CD4-positive, alpha-beta memory T cell (primary cell): ENCODE measurements at regions of chr21 and their contacts with region 1.

Region 1: GRCh38 chr21:15592271-15592860 is 137.4 kb upstream of the USP25 start:
- DNase-seq: peak in 4 of 5 donors; percentile 25 to 37 (median 32)
- H3K4me3 ChIP-seq: no peak overlapping the region
- H3K4me3 Mint-ChIP-seq: no peak overlapping the region
- H3K27ac ChIP-seq: no peak overlapping the region
- H3K27ac Mint-ChIP-seq: no peak overlapping the region
- H3K4me1 ChIP-seq: no peaks in the 10 kb centered on the region
- H3K4me1 Mint-ChIP-seq: no peaks in the 10 kb centered on the region
- H3K27me3 ChIP-seq: no peaks in the 10 kb centered on the region
- H3K27me3 Mint-ChIP-seq: peaks cover 6% of the 10 kb centered on the region in 2 donors

Region 2: DNA sequence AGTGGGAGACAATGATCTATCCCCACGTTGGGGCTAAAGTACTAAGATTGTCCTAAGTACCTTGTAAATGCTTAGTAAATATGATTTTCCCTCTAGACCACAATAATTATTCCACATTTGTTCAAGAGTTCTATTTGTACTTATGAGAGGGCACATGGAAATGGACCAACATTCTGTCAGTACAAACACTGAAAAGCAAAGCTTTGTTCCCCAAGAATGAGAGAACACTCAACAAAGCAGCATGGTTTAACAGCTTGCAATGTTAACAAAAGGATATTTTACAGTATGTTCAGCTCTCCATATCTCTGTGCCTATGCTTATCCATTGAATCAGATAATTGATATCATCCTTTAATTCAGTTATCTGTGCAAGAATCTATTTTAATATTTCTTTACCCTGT is 1341.0 kb before region 1 on chr21:
- CTCF ChIA-PET with region 1: no interaction called
- POLR2A ChIA-PET with region 1: no interaction called
- intact Hi-C with region 1: loop called (anchors 1 kb)
- DNase-seq: no peak
- H3K4me3 ChIP-seq: no peak overlapping the region
- H3K4me3 Mint-ChIP-seq: no peak overlapping the region
- H3K27ac ChIP-seq: no peak overlapping the region
- H3K27ac Mint-ChIP-seq: no peak overlapping the region
- H3K4me1 ChIP-seq: peaks cover 4% of the 10 kb centered on the region
- H3K4me1 Mint-ChIP-seq: peaks cover 4 to 7% (median 5%) of the 10 kb centered on the region in 4 donors
- H3K27me3 ChIP-seq: no peaks in the 10 kb centered on the region
- H3K27me3 Mint-ChIP-seq: peaks cover 5 to 11% of the 10 kb centered on the region in 2 donors

Region 3: DNA sequence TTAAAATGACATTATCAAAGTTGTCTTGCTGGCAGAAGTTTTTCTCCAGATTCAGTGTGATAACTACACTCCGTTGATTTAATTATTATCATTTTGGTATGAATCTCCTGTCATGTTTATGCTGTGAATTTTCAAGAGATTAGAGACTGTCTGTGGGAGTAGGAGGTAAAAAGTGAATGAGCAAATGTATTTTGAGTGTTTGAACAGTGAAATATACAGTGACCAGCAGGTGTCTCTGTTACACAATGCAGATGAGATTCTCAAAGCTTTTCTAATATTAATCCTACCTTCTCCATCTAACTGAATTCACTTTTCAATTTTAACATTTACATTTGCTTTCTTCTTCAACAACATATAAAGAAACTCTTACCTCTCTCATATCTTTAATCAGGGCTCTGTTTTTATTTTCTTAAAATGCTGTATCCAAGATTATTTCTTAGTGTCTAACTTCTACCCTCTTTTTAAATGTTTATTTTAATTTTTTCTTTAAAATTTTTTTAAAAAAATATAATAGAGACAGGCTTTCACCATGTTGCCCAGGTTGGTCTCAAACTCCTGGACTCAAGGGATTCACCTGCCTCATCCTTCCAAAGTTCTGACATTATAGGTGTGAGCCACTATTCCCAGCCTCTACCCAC is 1188.6 kb before region 1 on chr21:
- CTCF ChIA-PET with region 1: no interaction called
- POLR2A ChIA-PET with region 1: no interaction called
- intact Hi-C with region 1: loop called (anchors 1 kb)
- DNase-seq: peak in 4 of 5 donors; percentile 32 to 45 (median 38)
- H3K4me3 ChIP-seq: no peak overlapping the region
- H3K4me3 Mint-ChIP-seq: no peak overlapping the region
- H3K27ac ChIP-seq: no peak overlapping the region
- H3K27ac Mint-ChIP-seq: no peak overlapping the region
- H3K4me1 ChIP-seq: no peaks in the 10 kb centered on the region
- H3K4me1 Mint-ChIP-seq: peaks cover 0 to 1% (median 0%) of the 10 kb centered on the region in 4 donors
- H3K27me3 ChIP-seq: no peaks in the 10 kb centered on the region
- H3K27me3 Mint-ChIP-seq: peaks cover 0 to 3% of the 10 kb centered on the region in 2 donors

Region 4: GRCh38 chr21:14864211-14865021 is 728.0 kb before region 1 on chr21:
- CTCF ChIA-PET with region 1: no interaction called
- POLR2A ChIA-PET with region 1: no interaction called
- intact Hi-C with region 1: loop called (anchors 2 kb)
- DNase-seq: peak in 2 of 5 donors; percentile 3 to 4
- H3K4me3 ChIP-seq: no peak overlapping the region
- H3K4me3 Mint-ChIP-seq: no peak overlapping the region
- H3K27ac ChIP-seq: no peak overlapping the region
- H3K27ac Mint-ChIP-seq: no peak overlapping the region
- H3K4me1 ChIP-seq: no peaks in the 10 kb centered on the region
- H3K4me1 Mint-ChIP-seq: peaks cover 0 to 1% (median 0%) of the 10 kb centered on the region in 4 donors
- H3K27me3 ChIP-seq: no peaks in the 10 kb centered on the region
- H3K27me3 Mint-ChIP-seq: no peaks in the 10 kb centered on the region

Region 5: DNA sequence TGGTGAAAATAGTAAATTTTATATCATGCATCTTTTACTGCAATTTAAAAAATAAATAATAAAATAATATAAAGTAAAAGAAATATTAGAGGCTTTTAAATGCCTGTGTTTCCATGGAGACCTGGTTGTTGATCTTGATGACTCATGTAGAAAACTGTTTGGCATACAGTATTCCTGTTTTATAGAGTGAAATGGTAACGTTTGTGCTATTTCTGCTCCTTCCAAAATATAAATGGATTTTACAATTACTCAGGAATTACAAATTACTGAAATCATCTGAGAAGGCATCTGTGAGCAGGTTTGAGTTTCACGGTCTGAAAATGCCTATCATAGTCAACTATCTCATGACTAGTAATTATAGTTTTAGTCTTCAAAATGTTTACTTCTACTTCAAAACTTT is 39.0 kb after region 1 on chr21:
- CTCF ChIA-PET with region 1: no interaction called
- POLR2A ChIA-PET with region 1: no interaction called
- intact Hi-C with region 1: no loop called
- DNase-seq: no peak
- H3K4me3 ChIP-seq: no peak overlapping the region
- H3K4me3 Mint-ChIP-seq: no peak overlapping the region
- H3K27ac ChIP-seq: no peak overlapping the region
- H3K27ac Mint-ChIP-seq: no peak overlapping the region
- H3K4me1 ChIP-seq: no peaks in the 10 kb centered on the region
- H3K4me1 Mint-ChIP-seq: no peaks in the 10 kb centered on the region
- H3K27me3 ChIP-seq: no peaks in the 10 kb centered on the region
- H3K27me3 Mint-ChIP-seq: no peaks in the 10 kb centered on the region